CD4-positive, alpha-beta T cell (primary cell): ENCODE measurements at regions of chr6 and their contacts with region 1.

Region 1: GRCh38 chr6:143575440-143575839 is 63.9 kb upstream of the FUCA2 start:
- DNase-seq: peak in 11 of 14 experiments; percentile 18 to 85 (median 41)
- ATAC-seq: peak; percentile 99
- H3K4me3 ChIP-seq: no peak overlapping the region
- H3K4me3 Mint-ChIP-seq: no peak overlapping the region
- H3K27ac ChIP-seq: no peak overlapping the region
- H3K27ac Mint-ChIP-seq: no peak overlapping the region
- H3K4me1 ChIP-seq: no peaks in the 10 kb centered on the region
- H3K4me1 Mint-ChIP-seq: no peaks in the 10 kb centered on the region
- H3K27me3 ChIP-seq: no peaks in the 10 kb centered on the region
- H3K27me3 Mint-ChIP-seq: no peaks in the 10 kb centered on the region
- CTCF ChIP-seq: peak; percentile 85

Region 2: DNA sequence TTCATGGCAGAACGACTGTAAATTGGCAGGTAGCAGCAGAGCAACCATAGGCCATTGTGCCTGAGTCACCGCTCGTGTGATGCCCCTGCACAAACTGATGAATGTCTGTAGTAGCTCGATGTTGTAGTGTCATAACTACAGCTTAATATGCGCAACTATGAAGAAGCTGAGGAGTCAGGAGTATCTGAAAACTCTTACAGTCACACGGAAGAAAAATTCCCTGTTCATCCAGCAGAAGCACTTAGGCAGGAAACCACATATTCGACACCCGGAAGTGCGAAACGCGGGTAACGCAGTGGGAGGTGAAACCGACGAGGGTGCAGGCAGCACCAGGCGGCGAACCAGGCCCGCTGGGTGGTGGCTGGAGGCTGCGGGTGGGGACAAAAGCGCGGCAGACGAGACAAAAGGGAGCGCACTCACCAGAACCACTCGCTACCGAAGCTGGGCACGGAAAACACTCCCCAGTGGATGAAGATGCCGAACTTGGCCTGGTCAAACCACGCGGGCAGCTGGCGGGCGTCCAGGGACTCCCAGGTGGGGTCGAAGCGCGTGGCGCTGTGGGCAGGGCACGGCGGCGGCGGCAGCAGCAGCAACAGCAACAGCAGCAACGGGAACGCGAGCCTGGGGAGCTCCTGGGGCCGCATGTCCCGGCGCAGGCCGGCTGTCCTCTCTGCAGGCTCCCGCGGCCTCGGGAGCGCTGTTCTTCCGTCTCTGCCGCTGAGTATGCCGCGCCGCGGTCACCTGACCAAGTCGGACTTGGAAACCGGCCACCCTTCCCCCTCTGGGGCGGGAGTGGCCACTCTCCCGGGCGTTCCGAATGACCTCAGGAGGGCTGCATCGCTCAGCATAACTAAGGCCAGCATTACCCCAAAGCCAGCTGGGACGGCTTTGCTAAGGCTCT is 64.2 kb before region 1 on chr6 and contains the start of gene FUCA2:
- CTCF ChIA-PET with region 1: interaction called, 10 read pairs
- POLR2A ChIA-PET with region 1: interaction called, 3 read pairs
- intact Hi-C with region 1: no loop called
- DNase-seq: peak; percentile 42 to 86 (median 62)
- ATAC-seq: peak; percentile 84
- H3K4me3 ChIP-seq: peak within 1 kb of the TSS; percentile 66
- H3K4me3 Mint-ChIP-seq: peak within 1 kb of the TSS; percentile 96
- H3K27ac ChIP-seq: peak within 1 kb of the TSS; percentile 31 to 46
- H3K27ac Mint-ChIP-seq: peak within 1 kb of the TSS; percentile 90
- H3K4me1 ChIP-seq: peaks cover 25% of the 10 kb centered on the region
- H3K4me1 Mint-ChIP-seq: peaks cover 23% of the 10 kb centered on the region
- H3K27me3 ChIP-seq: no peaks in the 10 kb centered on the region
- H3K27me3 Mint-ChIP-seq: no peaks in the 10 kb centered on the region
- CTCF ChIP-seq: no peak
- total RNA-seq, gene FUCA2: 1.1 to 1.5 TPM

Region 3: GRCh38 chr6:143542888-143543287 is 32.6 kb before region 1 on chr6:
- CTCF ChIA-PET with region 1: interaction called, 13 read pairs
- POLR2A ChIA-PET with region 1: interaction called, 10 read pairs
- intact Hi-C with region 1: no loop called
- DNase-seq: peak in 1 of 14 experiments; percentile 32
- ATAC-seq: peak; percentile 28
- H3K4me3 ChIP-seq: no peak overlapping the region
- H3K4me3 Mint-ChIP-seq: peak overlapping the region; percentile 2
- H3K27ac ChIP-seq: no peak overlapping the region
- H3K27ac Mint-ChIP-seq: peak overlapping the region; percentile 95
- H3K4me1 ChIP-seq: peaks cover 72% of the 10 kb centered on the region
- H3K4me1 Mint-ChIP-seq: peaks cover 85% of the 10 kb centered on the region
- H3K27me3 ChIP-seq: no peaks in the 10 kb centered on the region
- H3K27me3 Mint-ChIP-seq: no peaks in the 10 kb centered on the region
- CTCF ChIP-seq: no peak

Region 4: GRCh38 chr6:143842902-143843676 is 267.6 kb after region 1 on chr6 and contains the start of gene LTV1:
- CTCF ChIA-PET with region 1: interaction called, 7 read pairs
- POLR2A ChIA-PET with region 1: interaction called, 9 read pairs
- intact Hi-C with region 1: loop called (anchors 1 to 5 kb)
- DNase-seq: peak; percentile 82 to 96 (median 88)
- ATAC-seq: peak; percentile 95
- H3K4me3 ChIP-seq: peak within 1 kb of the TSS; percentile 90
- H3K4me3 Mint-ChIP-seq: peak within 1 kb of the TSS; percentile 98
- H3K27ac ChIP-seq: peak within 1 kb of the TSS; percentile 88 to 95
- H3K27ac Mint-ChIP-seq: peak within 1 kb of the TSS; percentile 98
- H3K4me1 ChIP-seq: peaks cover 23% of the 10 kb centered on the region
- H3K4me1 Mint-ChIP-seq: peaks cover 36% of the 10 kb centered on the region
- H3K27me3 ChIP-seq: no peaks in the 10 kb centered on the region
- H3K27me3 Mint-ChIP-seq: no peaks in the 10 kb centered on the region
- CTCF ChIP-seq: no peak
- total RNA-seq, gene LTV1: 27.0 to 28.5 TPM

Region 5: DNA sequence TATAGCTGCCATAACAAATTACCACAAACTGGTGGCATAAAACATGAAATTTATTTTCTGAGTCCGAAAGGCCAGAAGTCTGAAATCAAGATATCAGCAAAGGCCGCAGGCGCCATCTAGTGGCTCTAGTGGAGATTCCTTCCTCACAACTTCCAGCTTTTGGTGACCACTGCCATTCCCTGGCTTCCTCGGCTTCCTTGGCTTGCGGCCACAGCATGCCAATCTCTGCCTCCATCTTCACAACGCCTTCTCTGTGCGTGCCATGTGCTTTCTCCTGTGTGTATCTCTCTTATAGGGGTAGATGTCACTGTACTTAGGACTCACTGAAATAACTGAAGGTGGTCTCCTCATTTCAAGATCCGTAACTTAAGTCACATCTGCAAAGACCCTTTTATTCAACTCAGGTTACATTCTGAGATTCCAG is 438.1 kb after region 1 on chr6:
- CTCF ChIA-PET with region 1: interaction called, 31 read pairs
- POLR2A ChIA-PET with region 1: interaction called, 12 read pairs
- intact Hi-C with region 1: loop called (anchors 1 kb)
- DNase-seq: peak; percentile 43 to 80 (median 55)
- ATAC-seq: peak; percentile 52
- H3K4me3 ChIP-seq: no peak overlapping the region
- H3K4me3 Mint-ChIP-seq: no peak overlapping the region
- H3K27ac ChIP-seq: no peak overlapping the region
- H3K27ac Mint-ChIP-seq: no peak overlapping the region
- H3K4me1 ChIP-seq: peaks cover 1% of the 10 kb centered on the region
- H3K4me1 Mint-ChIP-seq: no peaks in the 10 kb centered on the region
- H3K27me3 ChIP-seq: peaks cover 0 to 2% of the 10 kb centered on the region in 2 experiments
- H3K27me3 Mint-ChIP-seq: peaks cover 27% of the 10 kb centered on the region
- CTCF ChIP-seq: peak; percentile 98

Region 6: DNA sequence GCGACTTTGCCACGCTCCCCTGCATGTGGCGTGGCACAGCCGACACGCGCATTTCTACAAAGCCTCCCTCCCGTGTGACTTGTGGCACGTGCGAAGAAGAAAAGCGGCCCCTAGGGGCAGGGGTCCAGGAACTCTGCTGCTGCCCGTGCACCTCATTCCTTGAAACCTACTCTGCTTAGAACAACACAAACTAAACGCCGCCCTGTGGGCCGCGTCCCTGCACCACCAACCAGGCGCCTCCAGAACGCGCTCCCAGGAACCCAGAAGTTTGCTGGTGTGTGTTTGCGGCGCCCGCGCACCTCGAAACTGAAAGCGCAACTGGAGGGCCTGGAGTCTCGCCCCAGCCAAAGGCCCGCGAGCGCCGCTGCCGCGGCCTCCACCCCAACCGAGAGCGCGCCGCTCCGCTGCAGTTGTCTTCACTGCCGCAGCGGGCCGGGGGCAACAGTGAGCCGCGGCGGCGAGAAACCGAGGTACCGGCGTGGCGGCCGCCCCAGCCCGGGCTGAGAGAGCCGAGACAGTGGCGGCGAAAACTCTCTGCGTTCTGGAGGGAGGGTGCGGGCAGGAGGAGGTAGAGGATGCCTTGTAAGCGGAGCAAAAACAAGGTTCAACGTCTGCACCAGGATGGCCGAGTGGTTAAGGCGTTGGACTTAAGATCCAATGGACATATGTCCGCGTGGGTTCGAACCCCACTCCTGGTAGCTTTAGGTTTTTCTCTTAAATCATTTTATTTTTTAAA is 640.7 kb after region 1 on chr6:
- CTCF ChIA-PET with region 1: no interaction called
- POLR2A ChIA-PET with region 1: no interaction called
- intact Hi-C with region 1: loop called (anchors 5 to 10 kb)
- DNase-seq: peak; percentile 84 to 96 (median 90)
- ATAC-seq: peak; percentile 84
- H3K4me3 ChIP-seq: peak overlapping the region; percentile 84
- H3K4me3 Mint-ChIP-seq: peak overlapping the region; percentile 98
- H3K27ac ChIP-seq: peak overlapping the region; percentile 73 to 82
- H3K27ac Mint-ChIP-seq: peak overlapping the region; percentile 100
- H3K4me1 ChIP-seq: peaks cover 26% of the 10 kb centered on the region
- H3K4me1 Mint-ChIP-seq: peaks cover 45% of the 10 kb centered on the region
- H3K27me3 ChIP-seq: no peaks in the 10 kb centered on the region
- H3K27me3 Mint-ChIP-seq: peaks cover 18% of the 10 kb centered on the region
- CTCF ChIP-seq: peak; percentile 78

Region 7: DNA sequence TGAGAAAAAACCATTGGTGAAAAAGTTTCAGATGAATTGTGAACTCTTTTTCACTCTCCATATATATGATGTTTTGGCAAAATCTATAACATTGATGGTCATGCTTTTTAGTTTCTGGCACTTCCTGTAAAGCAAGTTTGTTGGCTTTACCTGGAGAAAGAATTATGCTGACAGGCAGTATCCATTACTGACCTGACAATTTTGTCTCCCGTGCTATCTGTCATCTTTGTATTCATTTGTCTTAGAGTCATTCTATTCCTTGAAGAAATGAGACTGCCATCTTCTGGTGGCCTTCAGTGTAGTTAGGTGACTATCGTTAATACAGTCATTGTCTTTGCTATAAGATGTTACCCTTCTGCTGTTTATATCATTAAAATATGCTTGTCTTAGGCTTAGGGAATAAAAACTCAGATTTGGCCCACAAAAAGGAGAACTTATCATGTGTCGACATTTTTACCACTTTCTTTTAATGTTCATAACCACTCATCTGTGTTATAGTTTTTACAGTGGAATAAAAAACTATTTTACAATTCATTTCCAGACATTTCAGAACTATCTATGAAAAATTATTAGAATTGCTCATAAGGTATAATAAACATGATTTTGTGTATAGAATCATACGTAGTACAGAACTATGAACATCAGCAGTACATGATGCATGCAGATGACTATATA is 1452.8 kb after region 1 on chr6:
- CTCF ChIA-PET with region 1: no interaction called
- POLR2A ChIA-PET with region 1: no interaction called
- intact Hi-C with region 1: loop called in 1 of 2 experiments (anchors 10 kb)
- DNase-seq: peak in 3 of 14 experiments; percentile 29 to 36 (median 30)
- ATAC-seq: peak; percentile 44
- H3K4me3 ChIP-seq: no peak overlapping the region
- H3K4me3 Mint-ChIP-seq: no peak overlapping the region
- H3K27ac ChIP-seq: no peak overlapping the region
- H3K27ac Mint-ChIP-seq: no peak overlapping the region
- H3K4me1 ChIP-seq: no peaks in the 10 kb centered on the region
- H3K4me1 Mint-ChIP-seq: no peaks in the 10 kb centered on the region
- H3K27me3 ChIP-seq: no peaks in the 10 kb centered on the region
- H3K27me3 Mint-ChIP-seq: peaks cover 25% of the 10 kb centered on the region
- CTCF ChIP-seq: peak; percentile 35